HepG2 (cell line): ENCODE measurements at regions of chr1 and their contacts with region 1.

Region 1: GRCh38 chr1:63640633-63641567 is 47.7 kb downstream of the PGM1 start:
- DNase-seq: peak; percentile 97
- ATAC-seq: peak; percentile 92
- H3K4me3 ChIP-seq: peak overlapping the region in 1 of 3 experiments; percentile 47; a peak in 2 of 6 replicates
- H3K27ac ChIP-seq: peak overlapping the region; percentile 95
- H3K4me1 ChIP-seq: peaks cover 91% of the 10 kb centered on the region
- H3K27me3 ChIP-seq: no peaks in the 10 kb centered on the region
- CTCF ChIP-seq: no peak
- EP300 ChIP-seq: peak; percentile 62 to 91
- POLR2A ChIP-seq: peak in 1 of 2 experiments; percentile 36; a peak in 1 of 4 replicates
- RAD21 ChIP-seq: peak; percentile 7; the same call in 1 of the 2 replicates

Region 2: GRCh38 chr1:63367215-63368103 is 273.4 kb before region 1 on chr1 and contains the start of gene ALG6:
- CTCF ChIA-PET with region 1: no interaction called
- POLR2A ChIA-PET with region 1: no interaction called
- in situ Hi-C with region 1: no loop called
- intact Hi-C with region 1: no loop called
- DNase-seq: peak; percentile 86
- ATAC-seq: peak; percentile 96
- H3K4me3 ChIP-seq: peak within 1 kb of the TSS; percentile 79 to 91 (median 82)
- H3K27ac ChIP-seq: peak within 1 kb of the TSS; percentile 73
- H3K4me1 ChIP-seq: peaks cover 15% of the 10 kb centered on the region; the same call in 1 of the 2 replicates
- H3K27me3 ChIP-seq: no peaks in the 10 kb centered on the region
- CTCF ChIP-seq: peak; percentile 79
- EP300 ChIP-seq: no peak
- POLR2A ChIP-seq: peak; percentile 90 to 94
- RAD21 ChIP-seq: peak; percentile 68; the same call in 1 of the 2 replicates
- total RNA-seq, gene ALG6: 4.5 and 8.1 TPM in 2 replicates

Region 3: GRCh38 chr1:63651161-63651701 is 10.3 kb after region 1 on chr1:
- CTCF ChIA-PET with region 1: no interaction called
- POLR2A ChIA-PET with region 1: interaction called, 4 read pairs
- in situ Hi-C with region 1: no loop called
- intact Hi-C with region 1: loop called (anchors 1 kb)
- DNase-seq: no peak
- ATAC-seq: no peak
- H3K4me3 ChIP-seq: no peak overlapping the region
- H3K27ac ChIP-seq: no peak overlapping the region
- H3K4me1 ChIP-seq: 0 out of 2 replicates have a peak, but pooled peaks cover 12% of the 10 kb centered on the region
- H3K27me3 ChIP-seq: no peaks in the 10 kb centered on the region
- CTCF ChIP-seq: no peak
- EP300 ChIP-seq: no peak
- POLR2A ChIP-seq: no peak
- RAD21 ChIP-seq: no peak

Region 4: GRCh38 chr1:63674238-63674864 is 33.5 kb after region 1 on chr1:
- CTCF ChIA-PET with region 1: no interaction called
- POLR2A ChIA-PET with region 1: interaction called, 25 read pairs
- in situ Hi-C with region 1: no loop called
- intact Hi-C with region 1: loop called (anchors 1 kb)
- DNase-seq: peak; percentile 94
- ATAC-seq: peak; percentile 95
- H3K4me3 ChIP-seq: 0 out of 6 replicates have a peak overlapping the region, but pooled peaks of 1 of the 3 experiments have one; percentile 6
- H3K27ac ChIP-seq: peak overlapping the region; percentile 54
- H3K4me1 ChIP-seq: peaks cover 38% of the 10 kb centered on the region
- H3K27me3 ChIP-seq: no peaks in the 10 kb centered on the region
- CTCF ChIP-seq: peak; percentile 96
- EP300 ChIP-seq: no peak; a peak in 1 of 4 replicates
- POLR2A ChIP-seq: no peak
- RAD21 ChIP-seq: peak; percentile 71

Region 5: GRCh38 chr1:63713627-63714481 is 73.0 kb after region 1 on chr1:
- CTCF ChIA-PET with region 1: no interaction called
- POLR2A ChIA-PET with region 1: no interaction called
- in situ Hi-C with region 1: no loop called
- intact Hi-C with region 1: no loop called
- DNase-seq: no peak
- ATAC-seq: no peak
- H3K4me3 ChIP-seq: no peak overlapping the region
- H3K27ac ChIP-seq: no peak overlapping the region
- H3K4me1 ChIP-seq: peaks cover 13% of the 10 kb centered on the region
- H3K27me3 ChIP-seq: no peaks in the 10 kb centered on the region; a peak in 2 of 5 replicates
- CTCF ChIP-seq: no peak
- EP300 ChIP-seq: no peak
- POLR2A ChIP-seq: no peak
- RAD21 ChIP-seq: no peak